CD14-positive monocyte (primary cell): ENCODE measurements at regions of chr10 and their contacts with region 1.

Region 1: DNA sequence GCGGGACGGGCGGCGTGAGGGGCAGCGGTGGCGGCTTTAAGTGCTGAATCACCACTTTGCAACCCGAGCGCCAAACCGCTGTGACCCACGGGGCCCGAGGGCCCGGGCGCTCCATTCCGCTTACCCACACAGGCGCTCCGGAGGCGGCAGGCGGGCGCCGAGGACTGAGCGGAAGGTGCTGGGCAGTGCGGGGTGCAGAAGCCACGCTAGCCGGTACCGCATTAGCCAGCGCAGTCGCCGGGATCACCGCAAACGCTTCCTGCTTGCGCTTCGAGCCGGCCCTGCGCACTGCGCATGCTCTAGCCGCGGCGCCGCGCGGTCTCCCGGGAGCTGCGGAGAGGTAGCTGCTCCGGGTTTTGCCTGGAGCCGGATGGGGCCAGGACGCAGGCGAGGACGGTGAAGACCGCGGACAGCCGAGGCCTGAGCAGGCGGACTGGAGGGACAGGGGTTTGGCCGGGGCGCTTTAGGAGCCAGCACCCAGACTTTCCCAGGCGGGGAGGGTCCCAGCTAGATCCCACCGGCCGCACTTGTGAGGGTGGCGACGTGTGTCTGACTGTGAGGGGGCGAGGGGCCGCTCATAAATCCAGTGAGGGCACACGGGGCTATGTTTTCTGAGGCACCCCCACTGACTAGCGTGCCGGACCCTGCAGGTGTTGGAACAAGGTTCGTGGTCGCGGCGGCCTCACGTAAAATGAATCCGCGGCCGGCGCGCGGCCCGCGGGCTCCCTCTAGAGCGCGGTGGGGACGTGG is at the start of gene IDE:
- DNase-seq: peak; percentile 78 to 81 (median 80)
- H3K4me3 ChIP-seq: peak within 1 kb of the TSS; percentile 84 to 99 (median 92)
- H3K4me3 Mint-ChIP-seq: peak within 1 kb of the TSS; percentile 88 to 92
- H3K27ac ChIP-seq: peak within 1 kb of the TSS; percentile 91 to 97
- H3K27ac Mint-ChIP-seq: peak within 1 kb of the TSS; percentile 82 to 94 (median 92)
- H3K4me1 ChIP-seq: peaks cover 33 to 37% of the 10 kb centered on the region in 2 donors
- H3K4me1 Mint-ChIP-seq: peaks cover 50% of the 10 kb centered on the region
- H3K27me3 ChIP-seq: no peaks in the 10 kb centered on the region
- H3K27me3 Mint-ChIP-seq: peaks cover 0 to 5% (median 1%) of the 10 kb centered on the region in 3 donors
- CTCF ChIP-seq: no peak
- polyA plus RNA-seq, gene IDE: 10.7 to 21.8 (median 15.6) TPM

Region 2: GRCh38 chr10:92517034-92517655 is 56.8 kb before region 1 on chr10:
- intact Hi-C with region 1: loop called (anchors 2 kb)
- DNase-seq: peak; percentile 49 to 79 (median 64)
- H3K4me3 ChIP-seq: no peak overlapping the region
- H3K4me3 Mint-ChIP-seq: no peak overlapping the region
- H3K27ac ChIP-seq: no peak overlapping the region
- H3K27ac Mint-ChIP-seq: no peak overlapping the region
- H3K4me1 ChIP-seq: peaks cover 0 to 1% of the 10 kb centered on the region in 2 donors
- H3K4me1 Mint-ChIP-seq: peaks cover 6% of the 10 kb centered on the region
- H3K27me3 ChIP-seq: no peaks in the 10 kb centered on the region
- H3K27me3 Mint-ChIP-seq: peaks cover 0 to 1% (median 0%) of the 10 kb centered on the region in 3 donors
- CTCF ChIP-seq: peak; percentile 91

Region 3: GRCh38 chr10:92592761-92593618 is 19.0 kb after region 1 on chr10 and contains the start of gene KIF11:
- intact Hi-C with region 1: loop called in 1 of 2 experiments (anchors 2 kb)
- DNase-seq: peak; percentile 89 to 97 (median 91)
- H3K4me3 ChIP-seq: peak within 1 kb of the TSS; percentile 63 to 99 (median 72)
- H3K4me3 Mint-ChIP-seq: peak within 1 kb of the TSS; percentile 91 to 95
- H3K27ac ChIP-seq: peak within 1 kb of the TSS; percentile 93 to 97
- H3K27ac Mint-ChIP-seq: peak within 1 kb of the TSS; percentile 94 to 99 (median 97)
- H3K4me1 ChIP-seq: peaks cover 40 to 46% of the 10 kb centered on the region in 2 donors
- H3K4me1 Mint-ChIP-seq: peaks cover 52% of the 10 kb centered on the region
- H3K27me3 ChIP-seq: no peaks in the 10 kb centered on the region
- H3K27me3 Mint-ChIP-seq: peaks cover 0 to 3% (median 1%) of the 10 kb centered on the region in 3 donors
- CTCF ChIP-seq: no peak
- polyA plus RNA-seq, gene KIF11: 0.07 to 0.55 (median 0.40) TPM